ENCODE measurements at regions of chr19 and their contacts with region 1.

Region 1: GRCh38 chr19:10403137-10404021 is at the start of gene CDC37:
- DNase-seq: peak; percentile 99
- ATAC-seq: peak; percentile 94
- total RNA-seq, gene CDC37: 146 TPM

Region 2: GRCh38 chr19:10251792-10252694 is 151.3 kb before region 1 on chr19 and contains the start of gene MRPL4:
- intact Hi-C with region 1: no loop called
- DNase-seq: peak; percentile 97
- ATAC-seq: peak; percentile 95
- total RNA-seq, gene MRPL4: 72.4 TPM

Region 3: GRCh38 chr19:10315335-10316214 is 87.8 kb before region 1 on chr19 and contains the start of gene FDX2:
- intact Hi-C with region 1: no loop called
- DNase-seq: peak; percentile 95
- ATAC-seq: peak; percentile 95
- total RNA-seq, gene FDX2: 19.8 TPM

Region 4: GRCh38 chr19:10363789-10364281 is 39.5 kb before region 1 on chr19:
- intact Hi-C with region 1: no loop called
- DNase-seq: no peak
- ATAC-seq: no peak

Region 5: GRCh38 chr19:10421240-10422045 is 18.1 kb after region 1 on chr19:
- intact Hi-C with region 1: loop called (anchors 2 kb)
- DNase-seq: no peak
- ATAC-seq: no peak

Region 6: GRCh38 chr19:10543420-10544241 is 140.3 kb after region 1 on chr19 and contains the start of gene ATG4D:
- intact Hi-C with region 1: no loop called
- DNase-seq: peak; percentile 87
- ATAC-seq: peak; percentile 94
- total RNA-seq, gene ATG4D: 46.4 TPM

Region 7: GRCh38 chr19:10565567-10566407 is 162.4 kb after region 1 on chr19 and contains the start of gene KRI1:
- intact Hi-C with region 1: loop called (anchors 5 kb)
- DNase-seq: peak; percentile 100
- ATAC-seq: peak; percentile 87
- total RNA-seq, gene KRI1: 10.4 TPM

Measured in Right ventricle myocardium superior (tissue), 1 donor.